ENCODE measurements at regions of chr16 and their contacts with region 1.

Region 1: DNA sequence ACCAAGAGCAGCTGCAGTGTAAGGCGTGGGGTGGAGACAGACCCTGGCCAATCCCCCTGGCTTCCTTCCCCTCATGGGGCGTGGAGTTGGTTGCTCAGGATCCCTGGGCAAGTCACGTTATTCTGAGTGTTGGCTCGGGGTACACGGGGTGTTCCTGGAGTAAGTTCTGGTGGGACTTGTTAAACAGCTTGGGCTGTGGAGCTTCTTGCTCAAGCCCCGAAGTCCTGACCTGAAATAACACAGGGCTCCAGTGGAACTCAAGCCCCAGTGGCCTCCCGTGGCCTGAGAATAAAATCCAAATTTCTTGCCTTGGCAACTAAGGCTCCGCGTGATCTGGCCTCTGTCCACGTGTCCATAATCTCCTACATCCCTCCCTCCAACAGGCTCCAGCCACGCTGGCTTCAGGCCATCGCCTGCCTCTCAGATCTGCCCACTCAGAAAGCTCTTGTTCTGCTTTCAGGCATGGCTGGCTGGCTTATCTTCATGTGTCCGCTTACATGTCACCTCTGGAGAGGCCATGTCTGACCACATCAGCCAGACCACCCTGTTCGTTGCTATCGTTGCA is 49.3 kb upstream of the BCO1 start:
- DNase-seq: peak; percentile 32 to 86 (median 79)
- H3K4me3 ChIP-seq: peak overlapping the region in 7 of 59 donors; percentile 2 to 34 (median 6)
- H3K27ac ChIP-seq: peak overlapping the region in 58 of 59 donors; percentile 41 to 91 (median 78)
- H3K27me3 ChIP-seq: no peaks in the 10 kb centered on the region
- CTCF ChIP-seq: peak in 4 of 56 donors; percentile 8 to 39 (median 20)

Region 2: DNA sequence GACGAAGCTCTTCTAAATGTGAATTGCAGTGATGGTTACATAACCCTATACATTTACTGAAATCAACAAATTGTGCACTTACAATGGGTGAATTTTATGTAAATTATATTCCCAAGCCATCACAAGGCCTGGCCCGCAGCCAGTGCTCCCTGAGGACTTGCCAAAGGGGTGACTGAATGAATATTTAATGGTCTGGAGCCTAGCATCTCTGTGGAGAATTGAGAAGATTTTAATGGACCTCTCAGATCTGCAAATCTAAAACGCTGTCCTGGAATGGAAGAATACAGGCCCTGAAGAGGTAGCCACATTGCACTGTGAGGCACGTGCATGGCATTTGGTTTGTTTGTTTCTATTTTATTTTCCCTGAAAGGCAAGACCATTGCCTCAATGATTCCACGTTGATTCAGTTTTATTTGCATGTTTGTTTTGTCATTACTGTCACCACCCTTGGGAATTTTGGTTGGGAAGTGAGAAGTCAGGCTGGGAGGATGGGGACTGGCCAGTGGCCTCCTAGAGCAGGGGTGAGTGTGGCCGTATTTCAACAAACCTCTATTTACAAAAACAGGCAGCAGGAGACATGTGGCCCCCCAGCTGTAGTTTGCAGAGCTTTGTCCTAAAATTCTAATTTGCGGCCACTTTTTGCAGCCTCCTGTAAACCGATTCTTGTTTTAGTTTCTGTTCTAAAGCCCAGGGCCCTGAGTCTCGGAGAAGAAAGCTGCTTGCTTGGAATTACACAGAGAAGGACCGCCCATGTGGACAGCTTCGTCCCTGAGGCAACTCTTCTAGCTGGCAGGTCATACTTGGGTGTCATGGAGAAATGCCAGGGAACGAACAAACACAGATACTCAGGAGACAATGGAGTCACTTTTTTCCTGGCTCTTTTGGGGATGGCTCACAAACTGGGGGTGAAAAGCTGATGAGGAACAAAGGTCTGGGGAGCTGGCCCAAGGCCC is 52.5 kb before region 1 on chr16:
- intact Hi-C with region 1: loop called in 1 of 2 experiments (anchors 5 kb)
- DNase-seq: peak in 9 of 10 donors; percentile 55 to 86 (median 73)
- H3K4me3 ChIP-seq: peak overlapping the region in 33 of 59 donors; percentile 0 to 52 (median 24)
- H3K27ac ChIP-seq: peak overlapping the region; percentile 13 to 95 (median 79)
- H3K27me3 ChIP-seq: no peaks in the 10 kb centered on the region
- CTCF ChIP-seq: peak in 1 of 56 donors; percentile 10

Region 3: GRCh38 chr16:81158964-81159363 is 30.2 kb before region 1 on chr16:
- intact Hi-C with region 1: loop called in 1 of 2 experiments (anchors 5 kb)
- DNase-seq: peak in 7 of 10 donors; percentile 47 to 77 (median 65)
- H3K4me3 ChIP-seq: no peak overlapping the region
- H3K27ac ChIP-seq: peak overlapping the region; percentile 25 to 95 (median 89)
- H3K27me3 ChIP-seq: no peaks in the 10 kb centered on the region
- CTCF ChIP-seq: no peak